ENCODE measurements at regions of chr2 and their contacts with region 1.

Region 1: GRCh38 chr2:26244309-26245121 is at the starts of genes HADHA and HADHB:
- DNase-seq: peak; percentile 84
- H3K4me3 Mint-ChIP-seq: peak within 1 kb of the TSS; percentile 100
- H3K27ac Mint-ChIP-seq: peak within 1 kb of the TSS; percentile 98
- H3K4me1 Mint-ChIP-seq: peaks cover 55% of the 10 kb centered on the region
- H3K27me3 Mint-ChIP-seq: no peaks in the 10 kb centered on the region
- total RNA-seq, gene HADHA: 108 to 110 TPM
- total RNA-seq, gene HADHB: 71.4 to 72.6 TPM

Region 2: GRCh38 chr2:26184555-26185303 is 59.8 kb before region 1 on chr2:
- CTCF ChIA-PET with region 1: interaction called, 9 read pairs
- POLR2A ChIA-PET with region 1: interaction called, 19 read pairs
- DNase-seq: peak; percentile 88
- H3K4me3 Mint-ChIP-seq: peak overlapping the region; percentile 58
- H3K27ac Mint-ChIP-seq: no peak overlapping the region
- H3K4me1 Mint-ChIP-seq: peaks cover 18% of the 10 kb centered on the region
- H3K27me3 Mint-ChIP-seq: peaks cover 20% of the 10 kb centered on the region

Region 3: GRCh38 chr2:26330113-26330549 is 85.6 kb after region 1 on chr2:
- CTCF ChIA-PET with region 1: interaction called, 14 read pairs
- POLR2A ChIA-PET with region 1: interaction called, 5 read pairs
- DNase-seq: peak; percentile 88
- H3K4me3 Mint-ChIP-seq: no peak overlapping the region
- H3K27ac Mint-ChIP-seq: no peak overlapping the region
- H3K4me1 Mint-ChIP-seq: peaks cover 41% of the 10 kb centered on the region
- H3K27me3 Mint-ChIP-seq: no peaks in the 10 kb centered on the region

Region 4: GRCh38 chr2:26429779-26430578 is 185.5 kb after region 1 on chr2:
- CTCF ChIA-PET with region 1: no interaction called
- POLR2A ChIA-PET with region 1: no interaction called
- DNase-seq: no peak
- H3K4me3 Mint-ChIP-seq: no peak overlapping the region
- H3K27ac Mint-ChIP-seq: no peak overlapping the region
- H3K4me1 Mint-ChIP-seq: no peaks in the 10 kb centered on the region
- H3K27me3 Mint-ChIP-seq: peaks cover 21% of the 10 kb centered on the region